K562 (cell line): ENCODE measurements at regions of chr7 and their contacts with region 1.

Region 1: GRCh38 chr7:103447073-103447951 is 1.3 kb upstream of the SLC26A5 start:
- DNase-seq: peak; percentile 78 to 84 (median 80)
- ATAC-seq: peak; percentile 97
- H3K4me3 ChIP-seq: no peak overlapping the region
- H3K27ac ChIP-seq: no peak overlapping the region
- H3K4me1 ChIP-seq: peaks cover 9 to 14% of the 10 kb centered on the region in 2 experiments; a peak in 4 of 5 replicates
- H3K27me3 ChIP-seq: peaks cover 29 to 34% of the 10 kb centered on the region in 2 experiments
- CTCF ChIP-seq: peak; percentile 85 to 94 (median 92)
- EP300 ChIP-seq: no peak
- POLR2A ChIP-seq: no peak
- RAD21 ChIP-seq: peak; percentile 72 to 91

Region 2: GRCh38 chr7:103392018-103392417 is 55.3 kb before region 1 on chr7:
- CTCF ChIA-PET with region 1: no interaction called
- POLR2A ChIA-PET with region 1: no interaction called
- in situ Hi-C with region 1: no loop called
- intact Hi-C with region 1: no loop called
- DNase-seq: no peak
- ATAC-seq: no peak
- H3K4me3 ChIP-seq: no peak overlapping the region
- H3K27ac ChIP-seq: no peak overlapping the region
- H3K4me1 ChIP-seq: peaks cover 3 to 4% of the 10 kb centered on the region in 2 experiments; a peak in 2 of 5 replicates
- H3K27me3 ChIP-seq: peaks cover 10% of the 10 kb centered on the region in 2 experiments; a peak in 3 of 5 replicates
- CTCF ChIP-seq: no peak
- EP300 ChIP-seq: no peak
- POLR2A ChIP-seq: no peak
- RAD21 ChIP-seq: no peak

Region 3: GRCh38 chr7:103524042-103524907 is 77.0 kb after region 1 on chr7:
- CTCF ChIA-PET with region 1: no interaction called
- POLR2A ChIA-PET with region 1: no interaction called
- in situ Hi-C with region 1: no loop called
- intact Hi-C with region 1: loop called (anchors 2 kb)
- DNase-seq: peak; percentile 29 to 67 (median 46)
- ATAC-seq: peak; percentile 93
- H3K4me3 ChIP-seq: no peak overlapping the region
- H3K27ac ChIP-seq: no peak overlapping the region
- H3K4me1 ChIP-seq: peaks cover 0 to 3% of the 10 kb centered on the region in 2 experiments; a peak in 2 of 5 replicates
- H3K27me3 ChIP-seq: no peaks in the 10 kb centered on the region; a peak in 1 of 5 replicates
- CTCF ChIP-seq: peak; percentile 69 to 84 (median 74)
- EP300 ChIP-seq: no peak
- POLR2A ChIP-seq: no peak
- RAD21 ChIP-seq: peak; percentile 95 to 96

Region 4: GRCh38 chr7:103580031-103580430 is 132.7 kb after region 1 on chr7:
- CTCF ChIA-PET with region 1: no interaction called
- POLR2A ChIA-PET with region 1: no interaction called
- in situ Hi-C with region 1: no loop called
- intact Hi-C with region 1: no loop called
- DNase-seq: no peak
- ATAC-seq: no peak
- H3K4me3 ChIP-seq: no peak overlapping the region
- H3K27ac ChIP-seq: no peak overlapping the region
- H3K4me1 ChIP-seq: no peaks in the 10 kb centered on the region
- H3K27me3 ChIP-seq: no peaks in the 10 kb centered on the region
- CTCF ChIP-seq: no peak
- EP300 ChIP-seq: no peak
- POLR2A ChIP-seq: no peak
- RAD21 ChIP-seq: no peak

Region 5: GRCh38 chr7:103752997-103753396 is 305.7 kb after region 1 on chr7:
- CTCF ChIA-PET with region 1: no interaction called
- POLR2A ChIA-PET with region 1: no interaction called
- in situ Hi-C with region 1: no loop called
- intact Hi-C with region 1: loop called (anchors 5 kb)
- DNase-seq: peak in 1 of 4 experiments; percentile 25
- ATAC-seq: peak; percentile 73
- H3K4me3 ChIP-seq: no peak overlapping the region
- H3K27ac ChIP-seq: no peak overlapping the region
- H3K4me1 ChIP-seq: no peaks in the 10 kb centered on the region
- H3K27me3 ChIP-seq: no peaks in the 10 kb centered on the region
- CTCF ChIP-seq: peak in 2 of 3 experiments; percentile 28 to 50; a peak in 4 of 6 replicates
- EP300 ChIP-seq: no peak
- POLR2A ChIP-seq: no peak
- RAD21 ChIP-seq: peak; percentile 40 to 79

Region 6: GRCh38 chr7:104023100-104023499 is 575.8 kb after region 1 on chr7:
- CTCF ChIA-PET with region 1: no interaction called
- POLR2A ChIA-PET with region 1: no interaction called
- in situ Hi-C with region 1: no loop called
- intact Hi-C with region 1: no loop called
- DNase-seq: no peak
- ATAC-seq: peak; percentile 54; the same call in 2 of the 3 replicates
- H3K4me3 ChIP-seq: no peak overlapping the region
- H3K27ac ChIP-seq: no peak overlapping the region
- H3K4me1 ChIP-seq: peaks cover 0 to 7% of the 10 kb centered on the region in 2 experiments; a peak in 1 of 5 replicates
- H3K27me3 ChIP-seq: no peaks in the 10 kb centered on the region
- CTCF ChIP-seq: no peak
- EP300 ChIP-seq: no peak
- POLR2A ChIP-seq: no peak
- RAD21 ChIP-seq: no peak

Region 7: GRCh38 chr7:104179178-104179577 is 731.9 kb after region 1 on chr7:
- CTCF ChIA-PET with region 1: no interaction called
- POLR2A ChIA-PET with region 1: no interaction called
- in situ Hi-C with region 1: loop called (anchors 10 kb)
- intact Hi-C with region 1: no loop called
- DNase-seq: no peak
- ATAC-seq: no peak
- H3K4me3 ChIP-seq: no peak overlapping the region
- H3K27ac ChIP-seq: no peak overlapping the region
- H3K4me1 ChIP-seq: peaks cover 3 to 13% of the 10 kb centered on the region in 2 experiments; a peak in 4 of 5 replicates
- H3K27me3 ChIP-seq: no peaks in the 10 kb centered on the region
- CTCF ChIP-seq: no peak
- EP300 ChIP-seq: no peak
- POLR2A ChIP-seq: no peak
- RAD21 ChIP-seq: no peak